H1 (cell line): ENCODE measurements at regions of chr3 and their contacts with region 1.

Region 1: GRCh38 chr3:57007513-57008460 is 52.7 kb upstream of the SPATA12 start:
- DNase-seq: no peak
- H3K4me3 ChIP-seq: no peak overlapping the region
- H3K27ac ChIP-seq: no peak overlapping the region
- H3K4me1 ChIP-seq: peaks cover 2 to 8% (median 4%) of the 10 kb centered on the region in 4 experiments; a peak in 3 of 7 replicates
- H3K27me3 ChIP-seq: no peaks in the 10 kb centered on the region
- CTCF ChIP-seq: no peak
- EP300 ChIP-seq: no peak
- POLR2A ChIP-seq: no peak
- RAD21 ChIP-seq: no peak

Region 2: GRCh38 chr3:56547486-56547885 is 460.3 kb before region 1 on chr3:
- CTCF ChIA-PET with region 1: no interaction called
- POLR2A ChIA-PET with region 1: no interaction called
- DNase-seq: no peak
- H3K4me3 ChIP-seq: no peak overlapping the region
- H3K27ac ChIP-seq: no peak overlapping the region
- H3K4me1 ChIP-seq: no peaks in the 10 kb centered on the region
- H3K27me3 ChIP-seq: no peaks in the 10 kb centered on the region; a peak in 1 of 7 replicates
- CTCF ChIP-seq: no peak
- EP300 ChIP-seq: no peak
- POLR2A ChIP-seq: no peak
- RAD21 ChIP-seq: peak; percentile 34 to 40

Region 3: DNA sequence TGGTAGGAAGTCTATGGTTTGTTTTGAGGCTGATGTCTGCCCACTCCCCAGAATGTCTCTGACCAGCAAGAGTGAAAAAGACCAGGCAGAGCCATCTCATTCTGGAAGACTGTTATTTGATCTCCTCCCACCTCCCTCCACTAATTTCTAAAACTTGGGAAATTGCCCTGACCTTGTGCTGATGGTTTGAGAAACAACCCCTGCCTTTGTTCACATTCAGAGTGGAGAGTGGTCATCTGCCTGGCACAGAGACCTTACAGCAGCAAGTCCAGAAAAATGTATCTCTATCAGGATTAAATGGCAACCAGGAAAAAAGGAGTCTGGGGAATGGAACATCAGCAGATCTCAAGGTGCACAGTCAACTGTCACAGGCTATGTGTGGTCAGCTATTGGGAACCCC is 78.4 kb after region 1 on chr3:
- CTCF ChIA-PET with region 1: interaction called, 16 read pairs
- POLR2A ChIA-PET with region 1: no interaction called
- DNase-seq: no peak
- H3K4me3 ChIP-seq: no peak overlapping the region
- H3K27ac ChIP-seq: no peak overlapping the region
- H3K4me1 ChIP-seq: no peaks in the 10 kb centered on the region; a peak in 2 of 7 replicates
- H3K27me3 ChIP-seq: no peaks in the 10 kb centered on the region
- CTCF ChIP-seq: no peak
- EP300 ChIP-seq: no peak
- POLR2A ChIP-seq: no peak
- RAD21 ChIP-seq: no peak